Heart right ventricle (tissue), 16 donors: ENCODE measurements at regions of chr11 and their contacts with region 1.

Region 1: GRCh38 chr11:57116654-57117053 is 65.1 kb upstream of the LRRC55 start:
- DNase-seq: peak in 1 of 2 donors; percentile 23
- ATAC-seq: peak in 4 of 8 donors; percentile 47 to 57 (median 54)
- H3K4me3 ChIP-seq: no peak overlapping the region
- H3K27ac ChIP-seq: no peak overlapping the region
- H3K4me1 ChIP-seq: no peaks in the 10 kb centered on the region
- H3K27me3 ChIP-seq: no peaks in the 10 kb centered on the region
- CTCF ChIP-seq: peak in 8 of 9 donors; percentile 28 to 73 (median 62)

Region 2: GRCh38 chr11:56841210-56841810 is 275.3 kb before region 1 on chr11:
- intact Hi-C with region 1: loop called in 3 of 10 experiments (anchors 5 to 10 kb)
- DNase-seq: peak in 1 of 2 donors; percentile 40
- ATAC-seq: peak in 3 of 8 donors; percentile 35 to 75 (median 53)
- H3K4me3 ChIP-seq: no peak overlapping the region
- H3K27ac ChIP-seq: no peak overlapping the region
- H3K4me1 ChIP-seq: peaks cover 0 to 4% (median 0%) of the 10 kb centered on the region in 9 donors
- H3K27me3 ChIP-seq: peaks cover 0 to 9% (median 0%) of the 10 kb centered on the region in 7 donors
- CTCF ChIP-seq: peak; percentile 45 to 81 (median 70)

Region 3: DNA sequence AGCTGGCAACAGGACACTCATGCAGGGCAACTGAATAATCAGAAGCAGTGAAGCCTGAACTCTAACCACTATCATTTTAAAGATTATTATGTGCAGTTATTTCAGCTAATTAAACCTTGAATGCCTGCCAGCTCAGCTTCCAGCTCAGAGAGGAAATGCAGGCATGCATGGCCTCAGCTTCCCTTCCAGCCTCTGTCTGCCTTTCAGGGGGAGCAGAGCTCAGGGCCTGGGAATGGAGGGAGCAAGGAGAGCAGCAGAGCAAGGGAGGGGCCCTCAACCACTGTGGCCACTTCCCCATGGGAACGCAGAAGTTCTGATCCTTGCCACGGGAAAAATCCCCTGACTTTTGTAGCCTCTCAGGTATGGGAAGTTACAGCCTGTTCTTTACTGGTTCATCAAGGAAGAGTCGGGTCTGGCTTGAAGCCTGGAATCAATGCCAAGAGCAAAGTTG is 152.9 kb after region 1 on chr11:
- intact Hi-C with region 1: no loop called
- DNase-seq: no peak
- ATAC-seq: peak in 4 of 8 donors; percentile 45 to 70 (median 64)
- H3K4me3 ChIP-seq: no peak overlapping the region
- H3K27ac ChIP-seq: peak overlapping the region in 5 of 10 donors; percentile 16 to 67 (median 56)
- H3K4me1 ChIP-seq: peaks cover 0 to 16% (median 9%) of the 10 kb centered on the region in 9 donors
- H3K27me3 ChIP-seq: no peaks in the 10 kb centered on the region
- CTCF ChIP-seq: no peak